ENCODE measurements at regions of chr2 and their contacts with region 1.

Region 1: GRCh38 chr2:174771631-174772471 is 7.6 kb upstream of the CHRNA1 start:
- DNase-seq: peak; percentile 70 to 87
- ATAC-seq: peak; percentile 99
- H3K4me3 ChIP-seq: no peak overlapping the region
- H3K27ac ChIP-seq: peak overlapping the region; percentile 41 to 77; a peak in 5 of 6 replicates
- H3K4me1 ChIP-seq: peaks cover 7% of the 10 kb centered on the region
- CTCF ChIP-seq: peak; percentile 93
- EP300 ChIP-seq: no peak
- POLR2A ChIP-seq: no peak
- RAD21 ChIP-seq: peak; percentile 96 to 97

Region 2: GRCh38 chr2:174094542-174094941 is 677.3 kb before region 1 on chr2:
- CTCF ChIA-PET with region 1: no interaction called
- POLR2A ChIA-PET with region 1: no interaction called
- DNase-seq: no peak
- ATAC-seq: no peak
- H3K4me3 ChIP-seq: no peak overlapping the region
- H3K27ac ChIP-seq: no peak overlapping the region
- H3K4me1 ChIP-seq: no peaks in the 10 kb centered on the region
- CTCF ChIP-seq: no peak
- EP300 ChIP-seq: no peak
- POLR2A ChIP-seq: no peak
- RAD21 ChIP-seq: no peak

Region 3: GRCh38 chr2:174654419-174654941 is 117.4 kb before region 1 on chr2:
- CTCF ChIA-PET with region 1: no interaction called
- POLR2A ChIA-PET with region 1: no interaction called
- DNase-seq: no peak
- ATAC-seq: no peak
- H3K4me3 ChIP-seq: no peak overlapping the region
- H3K27ac ChIP-seq: no peak overlapping the region
- H3K4me1 ChIP-seq: peaks cover 6% of the 10 kb centered on the region; the same call in 1 of the 3 replicates
- CTCF ChIP-seq: no peak
- EP300 ChIP-seq: no peak
- POLR2A ChIP-seq: no peak
- RAD21 ChIP-seq: no peak

Region 4: GRCh38 chr2:174748948-174749347 is 22.9 kb before region 1 on chr2:
- CTCF ChIA-PET with region 1: interaction called, 26 read pairs
- POLR2A ChIA-PET with region 1: no interaction called
- DNase-seq: peak; percentile 54 to 57
- ATAC-seq: peak; percentile 88 to 95
- H3K4me3 ChIP-seq: no peak overlapping the region
- H3K27ac ChIP-seq: no peak overlapping the region
- H3K4me1 ChIP-seq: no peaks in the 10 kb centered on the region
- CTCF ChIP-seq: peak; percentile 86
- EP300 ChIP-seq: no peak
- POLR2A ChIP-seq: no peak
- RAD21 ChIP-seq: peak; percentile 76

Region 5: GRCh38 chr2:174797781-174798276 is 26.0 kb after region 1 on chr2:
- CTCF ChIA-PET with region 1: interaction called, 26 read pairs
- POLR2A ChIA-PET with region 1: no interaction called
- DNase-seq: no peak
- ATAC-seq: no peak
- H3K4me3 ChIP-seq: no peak overlapping the region
- H3K27ac ChIP-seq: no peak overlapping the region
- H3K4me1 ChIP-seq: 0 out of 3 replicates have a peak, but pooled peaks cover 5% of the 10 kb centered on the region
- CTCF ChIP-seq: no peak
- EP300 ChIP-seq: no peak
- POLR2A ChIP-seq: no peak
- RAD21 ChIP-seq: no peak

Region 6: GRCh38 chr2:174971865-174972781 is 200.3 kb after region 1 on chr2:
- CTCF ChIA-PET with region 1: interaction called, 29 read pairs
- POLR2A ChIA-PET with region 1: interaction called, 6 read pairs
- DNase-seq: peak; percentile 41 to 76
- ATAC-seq: peak; percentile 89 to 90
- H3K4me3 ChIP-seq: peak overlapping the region; percentile 17; the same call in 1 of the 3 replicates
- H3K27ac ChIP-seq: peak overlapping the region; percentile 71 to 87
- H3K4me1 ChIP-seq: peaks cover 59% of the 10 kb centered on the region
- CTCF ChIP-seq: no peak
- EP300 ChIP-seq: peak; percentile 42 to 59; a peak in 2 of 5 replicates
- POLR2A ChIP-seq: no peak
- RAD21 ChIP-seq: no peak

Region 7: GRCh38 chr2:174997110-174997509 is 225.3 kb after region 1 on chr2:
- CTCF ChIA-PET with region 1: interaction called, 274 read pairs
- POLR2A ChIA-PET with region 1: no interaction called
- DNase-seq: no peak
- ATAC-seq: no peak
- H3K4me3 ChIP-seq: no peak overlapping the region
- H3K27ac ChIP-seq: no peak overlapping the region
- H3K4me1 ChIP-seq: peaks cover 23% of the 10 kb centered on the region
- CTCF ChIP-seq: no peak
- EP300 ChIP-seq: no peak
- POLR2A ChIP-seq: no peak
- RAD21 ChIP-seq: no peak

Measured in A549 (cell line).